Spleen (tissue), 13 donors: ENCODE measurements at regions of chr14 and their contacts with region 1.

Region 1: DNA sequence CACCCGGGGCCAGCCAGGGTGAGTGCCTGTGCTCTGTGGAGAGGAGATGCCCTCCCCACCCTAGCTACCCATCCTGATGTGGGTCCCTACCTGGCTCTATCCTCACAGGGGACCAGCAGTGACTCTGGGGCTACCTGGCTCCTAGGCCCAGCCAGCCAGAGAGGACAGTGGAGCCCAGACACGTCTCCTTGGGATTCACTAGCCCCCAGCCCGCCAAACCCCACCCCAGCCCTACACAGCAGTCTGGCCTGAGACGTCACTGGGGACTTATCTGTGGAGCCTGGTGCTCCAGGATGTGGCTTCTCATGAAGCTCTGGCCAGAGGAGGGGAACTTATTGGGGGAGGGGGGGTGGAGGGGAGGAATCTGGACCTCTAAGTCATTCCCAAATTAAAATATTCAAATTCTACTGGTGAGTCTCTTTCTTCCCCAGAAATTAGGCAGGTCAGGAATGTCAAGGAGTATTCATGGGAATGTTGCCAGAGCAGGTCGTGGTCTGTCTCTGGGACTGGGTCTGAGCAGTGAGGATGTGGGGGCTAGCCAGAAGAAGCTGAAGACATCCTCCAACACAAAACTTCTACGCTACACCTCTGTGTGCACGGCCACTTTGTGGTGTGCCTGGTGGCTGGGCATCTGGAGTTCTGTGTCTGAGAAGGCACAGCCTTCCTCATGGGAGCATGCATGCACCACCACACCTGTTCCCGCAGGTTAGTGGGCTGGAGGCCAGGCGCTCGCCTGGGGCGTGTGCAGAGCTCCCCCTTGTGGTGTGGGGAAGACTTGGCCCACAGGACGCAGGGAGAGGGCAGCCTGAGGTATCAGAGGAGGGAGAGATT is 2.7 kb downstream of the CMTM5 start:
- DNase-seq: peak; percentile 88
- H3K4me3 ChIP-seq: no peak overlapping the region
- H3K27ac ChIP-seq: no peak overlapping the region
- H3K4me1 ChIP-seq: peaks cover 0 to 11% (median 0%) of the 10 kb centered on the region in 6 donors
- H3K27me3 ChIP-seq: peaks cover 0 to 43% (median 3%) of the 10 kb centered on the region in 7 donors
- CTCF ChIP-seq: peak; percentile 74 to 93 (median 85)
- POLR2A ChIP-seq: no peak

Region 2: DNA sequence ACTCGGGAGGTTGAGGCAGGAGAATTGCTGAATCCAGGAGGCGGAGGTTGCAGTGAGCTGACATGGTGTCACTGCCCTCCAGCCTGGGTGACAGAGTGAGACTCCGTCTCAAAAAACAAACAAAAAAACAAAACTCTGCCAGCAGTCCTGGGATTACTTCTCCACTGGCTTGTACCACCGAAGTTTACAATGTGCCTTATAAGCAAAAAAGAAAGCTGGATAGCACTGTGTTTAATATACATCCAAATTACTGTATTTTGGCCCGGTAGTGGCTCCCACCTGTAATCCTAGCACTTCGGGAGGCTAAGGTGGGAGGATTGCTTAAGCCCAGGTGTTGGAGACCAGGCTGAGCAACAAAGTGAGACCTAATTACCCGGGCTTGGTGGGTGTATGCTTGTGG is 110.4 kb before region 1 on chr14:
- intact Hi-C with region 1: loop called (anchors 5 kb)
- DNase-seq: no peak
- H3K4me3 ChIP-seq: no peak overlapping the region
- H3K27ac ChIP-seq: no peak overlapping the region
- H3K4me1 ChIP-seq: no peaks in the 10 kb centered on the region
- H3K27me3 ChIP-seq: peaks cover 0 to 7% (median 0%) of the 10 kb centered on the region in 7 donors
- CTCF ChIP-seq: no peak
- POLR2A ChIP-seq: no peak

Region 3: GRCh38 chr14:23327947-23328744 is 51.4 kb before region 1 on chr14:
- intact Hi-C with region 1: loop called (anchors 5 kb)
- DNase-seq: no peak
- H3K4me3 ChIP-seq: no peak overlapping the region
- H3K27ac ChIP-seq: no peak overlapping the region
- H3K4me1 ChIP-seq: peaks cover 5 to 23% (median 13%) of the 10 kb centered on the region in 6 donors
- H3K27me3 ChIP-seq: no peaks in the 10 kb centered on the region
- CTCF ChIP-seq: peak; percentile 62 to 90 (median 86)
- POLR2A ChIP-seq: no peak

Region 4: GRCh38 chr14:23766737-23767401 is 387.3 kb after region 1 on chr14:
- intact Hi-C with region 1: no loop called
- DNase-seq: no peak
- H3K4me3 ChIP-seq: no peak overlapping the region
- H3K27ac ChIP-seq: no peak overlapping the region
- H3K4me1 ChIP-seq: no peaks in the 10 kb centered on the region
- H3K27me3 ChIP-seq: peaks cover 0 to 3% (median 0%) of the 10 kb centered on the region in 7 donors
- CTCF ChIP-seq: no peak
- POLR2A ChIP-seq: no peak